ENCODE measurements at regions of chr14 and their contacts with region 1.

Region 1: DNA sequence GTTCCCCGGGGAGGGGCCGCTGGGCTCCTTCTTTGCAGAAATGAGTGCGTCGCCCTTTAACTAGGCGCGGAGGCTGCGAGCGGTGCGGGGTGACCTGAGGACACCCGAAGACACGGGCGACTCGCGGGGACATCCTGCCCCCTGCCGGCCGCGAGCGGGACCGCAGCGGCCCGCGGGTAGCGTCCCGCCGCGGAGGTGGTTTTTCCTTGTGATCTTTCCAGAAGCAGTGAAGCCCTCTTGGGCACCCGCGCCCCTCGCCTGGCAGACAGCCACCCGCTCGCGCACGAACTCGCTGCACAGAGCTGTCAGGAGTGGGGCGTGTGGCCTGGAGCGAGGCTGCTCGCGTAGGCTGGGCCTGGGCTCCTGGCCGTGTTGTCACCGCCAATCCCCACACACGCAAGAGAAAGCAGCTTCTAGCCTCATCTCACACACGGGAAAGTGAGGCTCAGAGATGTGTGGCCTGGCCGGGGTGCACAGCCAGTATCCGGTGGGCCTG is 67.2 kb downstream of the DIO3 start:
- DNase-seq: peak; percentile 93
- H3K4me3 ChIP-seq: peak overlapping the region in 1 of 2 experiments; percentile 49; a peak in 1 of 4 replicates
- H3K27ac ChIP-seq: peak overlapping the region in 1 of 2 experiments; percentile 96; a peak in 2 of 4 replicates
- H3K4me1 ChIP-seq: peaks cover 0 to 36% of the 10 kb centered on the region in 2 experiments; a peak in 2 of 4 replicates
- H3K27me3 ChIP-seq: no peaks in the 10 kb centered on the region; the same call in 1 of the 2 replicates
- CTCF ChIP-seq: peak; percentile 88
- EP300 ChIP-seq: no peak; a peak in 1 of 4 replicates
- RAD21 ChIP-seq: peak; percentile 95

Region 2: DNA sequence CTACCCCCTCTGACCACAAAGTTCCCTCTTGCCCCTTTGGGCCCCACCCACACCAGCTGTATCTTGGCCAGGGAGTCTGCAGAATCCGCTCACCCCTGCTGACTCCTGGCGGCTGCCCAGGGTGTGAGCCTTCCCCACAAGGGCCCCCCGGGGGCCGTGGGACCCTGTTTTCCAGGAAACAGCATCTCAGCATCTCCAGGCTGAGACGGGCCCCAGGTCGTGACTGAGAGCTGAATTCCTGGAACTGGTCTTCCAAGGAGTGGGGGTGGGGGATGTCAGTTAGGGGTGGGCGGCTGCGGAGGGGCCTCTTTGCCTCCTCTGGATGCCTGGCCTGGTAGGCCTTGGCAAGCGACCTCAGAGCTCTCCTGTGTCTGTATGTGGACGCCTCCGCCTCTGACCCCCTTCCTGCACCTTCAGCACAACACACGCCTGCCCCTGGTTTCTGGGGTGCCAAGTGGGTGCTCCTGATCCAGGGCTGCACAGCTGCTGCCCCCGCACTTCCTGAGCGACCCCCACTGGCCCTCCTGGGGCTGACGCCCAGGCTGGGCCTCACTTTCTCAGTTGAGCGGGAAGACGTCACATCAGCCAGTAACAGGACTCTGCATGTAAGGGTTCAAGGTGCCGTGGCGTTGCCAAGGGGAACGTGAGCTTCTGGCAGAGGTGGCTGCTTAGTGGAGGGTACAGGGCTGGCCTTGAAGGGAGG is 402.9 kb before region 1 on chr14:
- CTCF ChIA-PET with region 1: interaction called, 13 read pairs
- POLR2A ChIA-PET with region 1: no interaction called
- DNase-seq: no peak
- H3K4me3 ChIP-seq: no peak overlapping the region
- H3K27ac ChIP-seq: peak overlapping the region in 1 of 2 experiments; percentile 97; a peak in 2 of 4 replicates
- H3K4me1 ChIP-seq: peaks cover 0 to 72% of the 10 kb centered on the region in 2 experiments; a peak in 1 of 4 replicates
- H3K27me3 ChIP-seq: no peaks in the 10 kb centered on the region
- CTCF ChIP-seq: no peak
- EP300 ChIP-seq: no peak
- RAD21 ChIP-seq: no peak

Region 3: GRCh38 chr14:101235335-101236103 is 393.0 kb before region 1 on chr14:
- CTCF ChIA-PET with region 1: interaction called, 42 read pairs
- POLR2A ChIA-PET with region 1: no interaction called
- DNase-seq: peak; percentile 95
- H3K4me3 ChIP-seq: no peak overlapping the region
- H3K27ac ChIP-seq: peak overlapping the region in 1 of 2 experiments; percentile 58; a peak in 1 of 4 replicates
- H3K4me1 ChIP-seq: peaks cover 0 to 37% of the 10 kb centered on the region in 2 experiments; a peak in 1 of 4 replicates
- H3K27me3 ChIP-seq: no peaks in the 10 kb centered on the region
- CTCF ChIP-seq: peak; percentile 70
- EP300 ChIP-seq: no peak
- RAD21 ChIP-seq: peak; percentile 93

Region 4: DNA sequence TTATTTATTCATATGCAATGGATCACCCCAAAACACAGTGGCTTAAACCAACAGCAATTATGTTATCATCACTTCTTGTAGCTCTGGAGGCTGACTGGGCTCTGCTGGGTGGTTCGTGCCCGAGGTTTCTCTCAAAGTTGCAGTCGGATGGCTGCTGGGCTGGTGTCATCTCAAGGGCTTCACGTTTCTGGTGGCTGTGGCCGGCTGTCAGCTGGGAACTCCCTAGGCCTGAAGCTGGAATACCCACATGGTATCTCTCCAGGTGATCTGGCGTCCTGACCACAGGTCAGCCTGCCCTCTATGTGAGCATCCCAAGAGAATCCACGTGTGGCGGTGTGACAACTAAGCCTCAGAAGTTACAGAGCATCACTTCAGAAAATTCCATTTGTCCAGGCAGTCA is 55.2 kb before region 1 on chr14:
- CTCF ChIA-PET with region 1: no interaction called
- POLR2A ChIA-PET with region 1: no interaction called
- DNase-seq: no peak
- H3K4me3 ChIP-seq: no peak overlapping the region
- H3K27ac ChIP-seq: no peak overlapping the region
- H3K4me1 ChIP-seq: no peaks in the 10 kb centered on the region
- H3K27me3 ChIP-seq: no peaks in the 10 kb centered on the region
- CTCF ChIP-seq: no peak
- EP300 ChIP-seq: no peak
- RAD21 ChIP-seq: no peak

Region 5: GRCh38 chr14:101639241-101639833 is 10.8 kb after region 1 on chr14:
- CTCF ChIA-PET with region 1: interaction called, 25 read pairs
- POLR2A ChIA-PET with region 1: no interaction called
- DNase-seq: no peak
- H3K4me3 ChIP-seq: no peak overlapping the region
- H3K27ac ChIP-seq: no peak overlapping the region
- H3K4me1 ChIP-seq: no peaks in the 10 kb centered on the region; a peak in 1 of 4 replicates
- H3K27me3 ChIP-seq: no peaks in the 10 kb centered on the region; the same call in 1 of the 2 replicates
- CTCF ChIP-seq: no peak
- EP300 ChIP-seq: no peak
- RAD21 ChIP-seq: no peak

Region 6: GRCh38 chr14:101665515-101666078 is 37.1 kb after region 1 on chr14:
- CTCF ChIA-PET with region 1: interaction called, 13 read pairs
- POLR2A ChIA-PET with region 1: no interaction called
- DNase-seq: peak; percentile 63
- H3K4me3 ChIP-seq: no peak overlapping the region
- H3K27ac ChIP-seq: no peak overlapping the region
- H3K4me1 ChIP-seq: peaks cover 0 to 5% of the 10 kb centered on the region in 2 experiments; a peak in 1 of 4 replicates
- H3K27me3 ChIP-seq: no peaks in the 10 kb centered on the region
- CTCF ChIP-seq: peak; percentile 50
- EP300 ChIP-seq: no peak
- RAD21 ChIP-seq: peak; percentile 92

Region 7: DNA sequence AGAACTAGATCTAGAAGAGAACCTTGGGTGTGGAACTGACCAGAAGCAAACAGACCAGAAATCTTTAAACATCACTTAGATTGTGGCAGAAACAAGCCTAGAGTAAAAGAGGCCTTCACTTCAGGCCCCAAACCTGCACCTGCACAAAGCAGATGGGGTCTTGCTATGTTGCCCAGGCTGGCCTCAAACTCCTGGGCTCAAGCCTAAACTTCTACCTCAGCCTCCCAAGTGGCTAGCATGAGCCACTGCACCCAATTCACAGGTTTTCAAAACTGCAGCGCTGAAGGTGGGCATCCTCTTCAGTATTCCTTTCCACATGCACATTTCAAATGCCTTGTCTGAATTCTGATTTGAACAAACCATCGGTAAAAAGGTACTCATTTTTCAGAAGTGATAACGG is 656.6 kb after region 1 on chr14:
- CTCF ChIA-PET with region 1: no interaction called
- POLR2A ChIA-PET with region 1: no interaction called
- DNase-seq: no peak
- H3K4me3 ChIP-seq: no peak overlapping the region
- H3K27ac ChIP-seq: no peak overlapping the region
- H3K4me1 ChIP-seq: 0 out of 4 replicates have a peak, but pooled peaks cover 0 to 3% of the 10 kb centered on the region in 2 experiments
- H3K27me3 ChIP-seq: no peaks in the 10 kb centered on the region
- CTCF ChIP-seq: no peak
- EP300 ChIP-seq: no peak
- RAD21 ChIP-seq: no peak

Measured in SK-N-SH (cell line).